ENCODE measurements at regions of chr7 and their contacts with region 1.

Region 1: DNA sequence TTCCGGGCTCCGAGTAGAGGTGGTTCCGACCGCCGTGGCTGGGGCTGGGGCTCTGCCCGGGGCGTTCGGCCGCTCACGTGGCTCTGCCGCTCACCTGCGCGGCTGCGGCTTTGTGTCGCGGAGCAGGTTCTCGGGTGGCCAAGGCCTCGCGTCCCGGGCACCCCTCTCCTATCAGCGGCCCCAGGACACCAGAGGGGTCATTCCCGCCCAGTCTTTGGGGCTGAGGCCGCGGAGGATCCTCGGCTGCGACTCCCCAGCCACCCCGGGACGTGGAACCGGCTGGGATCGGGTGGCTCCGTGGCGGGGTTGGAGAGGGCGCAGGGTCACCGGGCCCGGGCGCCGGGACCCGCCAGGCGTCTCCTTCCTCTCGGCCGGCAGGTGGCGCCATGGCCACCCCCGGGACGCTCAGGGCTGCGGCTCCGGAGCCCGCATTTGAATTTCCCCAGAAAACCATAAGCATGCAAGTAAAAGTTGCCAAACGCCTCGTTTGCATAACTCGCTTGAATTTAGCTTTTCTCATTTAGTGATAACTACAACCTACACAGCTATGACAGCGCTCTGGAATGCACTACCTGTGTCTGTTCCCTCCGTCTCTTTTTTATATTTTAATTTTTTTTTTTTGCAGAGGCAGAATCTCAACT is 1.2 kb downstream of the COL26A1 start:
- DNase-seq: peak; percentile 72
- H3K4me3 ChIP-seq: peak overlapping the region; percentile 61
- H3K27ac ChIP-seq: no peak overlapping the region
- H3K4me1 ChIP-seq: no peaks in the 10 kb centered on the region
- H3K27me3 ChIP-seq: peaks cover 14% of the 10 kb centered on the region
- CTCF ChIP-seq: peak; percentile 92

Region 2: DNA sequence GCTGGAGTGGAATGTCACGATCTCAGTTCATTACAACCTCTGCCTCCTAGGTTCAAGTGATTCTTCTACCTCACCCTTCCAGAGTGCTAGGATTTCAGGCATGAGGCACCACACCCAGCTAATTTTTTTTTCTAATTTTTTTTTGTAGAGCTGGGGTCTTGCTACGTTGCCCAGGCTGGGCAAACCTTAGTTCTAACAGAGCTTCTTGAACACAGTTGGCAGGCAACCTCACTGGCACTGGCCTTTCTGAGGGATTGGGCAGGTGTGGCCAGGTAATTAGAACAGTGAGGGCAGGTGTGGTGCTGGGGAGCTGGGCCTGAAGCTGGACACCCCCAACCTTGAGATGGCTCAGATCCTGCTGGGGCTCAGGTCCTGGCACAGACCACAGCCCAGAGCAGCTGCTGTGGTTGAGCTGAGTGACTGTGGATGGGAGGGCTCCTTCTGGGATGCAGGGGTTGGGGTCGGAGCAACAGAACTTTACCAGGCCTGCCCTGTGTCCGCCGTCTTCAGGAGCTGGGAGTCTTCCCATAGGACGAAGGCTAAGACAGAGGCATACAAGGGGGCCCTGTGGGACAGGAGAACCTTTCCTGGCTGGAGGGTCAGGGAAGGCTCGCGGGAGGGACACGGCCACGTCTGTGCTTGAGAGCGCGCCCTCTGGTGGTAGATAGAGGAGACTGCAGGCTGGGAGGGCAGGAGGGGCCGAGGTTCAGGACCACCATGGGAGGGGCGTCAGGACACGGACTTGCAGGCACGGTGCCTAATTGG is 47.1 kb after region 1 on chr7:
- CTCF ChIA-PET with region 1: interaction called, 10 read pairs
- POLR2A ChIA-PET with region 1: no interaction called
- intact Hi-C with region 1: no loop called
- DNase-seq: peak; percentile 42
- H3K4me3 ChIP-seq: no peak overlapping the region
- H3K27ac ChIP-seq: no peak overlapping the region
- H3K4me1 ChIP-seq: no peaks in the 10 kb centered on the region
- H3K27me3 ChIP-seq: no peaks in the 10 kb centered on the region
- CTCF ChIP-seq: peak; percentile 97

Region 3: GRCh38 chr7:101441890-101442289 is 78.0 kb after region 1 on chr7:
- CTCF ChIA-PET with region 1: interaction called, 9 read pairs
- POLR2A ChIA-PET with region 1: no interaction called
- intact Hi-C with region 1: loop called (anchors 2 kb)
- DNase-seq: no peak
- H3K4me3 ChIP-seq: no peak overlapping the region
- H3K27ac ChIP-seq: no peak overlapping the region
- H3K4me1 ChIP-seq: no peaks in the 10 kb centered on the region
- H3K27me3 ChIP-seq: no peaks in the 10 kb centered on the region
- CTCF ChIP-seq: no peak

Region 4: DNA sequence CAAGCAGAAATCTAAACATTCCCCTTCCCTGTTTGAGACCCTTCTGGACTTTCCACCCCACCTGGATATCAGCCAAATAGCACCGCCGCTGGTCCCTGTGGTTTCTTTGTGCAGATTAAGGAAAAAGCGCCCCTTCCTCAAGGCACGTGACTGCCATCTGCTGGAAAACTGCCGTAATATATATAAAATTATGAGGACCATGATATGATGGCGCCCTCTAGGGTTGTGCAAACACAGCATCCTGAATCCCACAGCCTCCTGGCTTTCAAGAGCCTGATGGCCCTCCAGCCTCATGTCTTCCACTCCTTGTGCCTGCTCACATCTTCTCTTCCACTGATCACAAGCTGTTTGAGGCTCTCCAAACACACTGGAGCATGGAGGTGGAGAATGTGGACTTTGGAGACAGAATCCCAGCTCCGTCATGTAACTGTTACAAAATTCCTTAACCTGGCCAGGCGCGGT is 144.0 kb after region 1 on chr7:
- CTCF ChIA-PET with region 1: no interaction called
- POLR2A ChIA-PET with region 1: no interaction called
- intact Hi-C with region 1: loop called (anchors 2 kb)
- DNase-seq: peak; percentile 86
- H3K4me3 ChIP-seq: no peak overlapping the region
- H3K27ac ChIP-seq: no peak overlapping the region
- H3K4me1 ChIP-seq: no peaks in the 10 kb centered on the region
- H3K27me3 ChIP-seq: no peaks in the 10 kb centered on the region
- CTCF ChIP-seq: peak; percentile 98

Region 5: DNA sequence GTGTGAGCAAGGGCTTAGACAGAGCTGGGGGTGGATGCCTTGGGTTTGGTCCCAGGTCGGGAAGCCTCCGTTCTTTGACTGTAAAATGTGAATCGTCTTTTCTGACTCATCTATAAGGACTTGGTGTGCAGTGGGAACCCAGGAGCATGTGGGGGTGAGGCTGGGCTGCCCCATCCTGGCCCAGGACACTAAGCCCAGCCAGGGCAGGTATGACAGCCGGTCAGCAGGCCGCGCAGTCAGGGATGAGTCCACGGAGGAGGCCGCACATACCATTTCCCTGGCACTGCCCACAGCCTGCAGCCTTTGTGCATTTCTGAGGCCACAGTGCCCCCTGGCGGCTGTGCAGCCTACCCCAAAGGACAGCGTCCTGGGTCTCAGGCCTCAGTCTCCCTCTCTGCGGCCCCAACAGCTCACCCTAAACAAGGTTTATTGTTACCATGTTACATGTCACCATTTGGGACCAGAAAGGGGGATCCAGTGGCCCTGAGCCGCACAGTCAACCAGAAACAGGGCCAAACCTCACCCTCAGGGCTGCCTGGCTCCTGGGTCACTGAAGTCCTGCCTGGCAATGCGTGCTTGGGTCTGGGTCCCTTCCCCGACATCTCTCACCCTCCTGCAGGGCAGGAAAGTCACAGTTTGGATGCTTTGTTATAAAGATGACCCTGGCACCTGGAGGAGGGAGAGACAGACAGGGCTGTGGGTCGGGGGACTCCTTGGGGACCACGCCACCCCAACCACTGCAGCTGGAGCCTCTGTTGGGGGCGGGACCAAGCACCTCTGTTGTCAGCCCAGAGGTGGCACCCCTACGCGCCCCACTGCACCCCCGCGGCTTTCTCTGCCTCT is 908.4 kb after region 1 on chr7:
- CTCF ChIA-PET with region 1: interaction called, 12 read pairs
- POLR2A ChIA-PET with region 1: no interaction called
- intact Hi-C with region 1: no loop called
- DNase-seq: peak; percentile 73
- H3K4me3 ChIP-seq: no peak overlapping the region
- H3K27ac ChIP-seq: no peak overlapping the region
- H3K4me1 ChIP-seq: no peaks in the 10 kb centered on the region
- H3K27me3 ChIP-seq: no peaks in the 10 kb centered on the region
- CTCF ChIP-seq: peak; percentile 96

Measured in A673 (cell line).